Gastrocnemius medialis (tissue), 4 donors: ENCODE measurements at regions of chr7 and their contacts with region 1.

Region 1: GRCh38 chr7:106056513-106057203 is 55.5 kb downstream of the SYPL1 start:
- DNase-seq: peak; percentile 62 to 71
- ATAC-seq: peak; percentile 92 to 98
- H3K4me3 ChIP-seq: no peak overlapping the region
- H3K27ac ChIP-seq: no peak overlapping the region
- H3K4me1 ChIP-seq: peaks cover 0 to 4% of the 10 kb centered on the region in 2 donors
- H3K27me3 ChIP-seq: no peaks in the 10 kb centered on the region
- CTCF ChIP-seq: peak; percentile 88 to 92 (median 90)
- POLR2A ChIP-seq: no peak

Region 2: GRCh38 chr7:106031300-106032035 is 25.2 kb before region 1 on chr7:
- in situ Hi-C with region 1: no loop called
- intact Hi-C with region 1: no loop called
- DNase-seq: no peak
- ATAC-seq: no peak
- H3K4me3 ChIP-seq: no peak overlapping the region
- H3K27ac ChIP-seq: no peak overlapping the region
- H3K4me1 ChIP-seq: peaks cover 5 to 8% of the 10 kb centered on the region in 2 donors
- H3K27me3 ChIP-seq: no peaks in the 10 kb centered on the region
- CTCF ChIP-seq: no peak
- POLR2A ChIP-seq: no peak

Region 3: GRCh38 chr7:106153891-106154449 is 97.3 kb after region 1 on chr7:
- in situ Hi-C with region 1: loop called (anchors 5 kb)
- intact Hi-C with region 1: loop called (anchors 1 kb)
- DNase-seq: peak; percentile 66 to 79
- ATAC-seq: peak; percentile 89 to 98
- H3K4me3 ChIP-seq: peak overlapping the region in 2 of 4 donors; percentile 24 to 26
- H3K27ac ChIP-seq: no peak overlapping the region
- H3K4me1 ChIP-seq: peaks cover 13 to 19% of the 10 kb centered on the region in 2 donors
- H3K27me3 ChIP-seq: no peaks in the 10 kb centered on the region
- CTCF ChIP-seq: peak; percentile 95 to 98 (median 97)
- POLR2A ChIP-seq: no peak

Region 4: GRCh38 chr7:106450716-106451115 is 394.1 kb after region 1 on chr7:
- in situ Hi-C with region 1: loop called in 2 of 4 experiments (anchors 10 to 25 kb)
- intact Hi-C with region 1: no loop called
- DNase-seq: no peak
- ATAC-seq: no peak
- H3K4me3 ChIP-seq: no peak overlapping the region
- H3K27ac ChIP-seq: no peak overlapping the region
- H3K4me1 ChIP-seq: no peaks in the 10 kb centered on the region
- H3K27me3 ChIP-seq: no peaks in the 10 kb centered on the region
- CTCF ChIP-seq: no peak
- POLR2A ChIP-seq: no peak

Region 5: DNA sequence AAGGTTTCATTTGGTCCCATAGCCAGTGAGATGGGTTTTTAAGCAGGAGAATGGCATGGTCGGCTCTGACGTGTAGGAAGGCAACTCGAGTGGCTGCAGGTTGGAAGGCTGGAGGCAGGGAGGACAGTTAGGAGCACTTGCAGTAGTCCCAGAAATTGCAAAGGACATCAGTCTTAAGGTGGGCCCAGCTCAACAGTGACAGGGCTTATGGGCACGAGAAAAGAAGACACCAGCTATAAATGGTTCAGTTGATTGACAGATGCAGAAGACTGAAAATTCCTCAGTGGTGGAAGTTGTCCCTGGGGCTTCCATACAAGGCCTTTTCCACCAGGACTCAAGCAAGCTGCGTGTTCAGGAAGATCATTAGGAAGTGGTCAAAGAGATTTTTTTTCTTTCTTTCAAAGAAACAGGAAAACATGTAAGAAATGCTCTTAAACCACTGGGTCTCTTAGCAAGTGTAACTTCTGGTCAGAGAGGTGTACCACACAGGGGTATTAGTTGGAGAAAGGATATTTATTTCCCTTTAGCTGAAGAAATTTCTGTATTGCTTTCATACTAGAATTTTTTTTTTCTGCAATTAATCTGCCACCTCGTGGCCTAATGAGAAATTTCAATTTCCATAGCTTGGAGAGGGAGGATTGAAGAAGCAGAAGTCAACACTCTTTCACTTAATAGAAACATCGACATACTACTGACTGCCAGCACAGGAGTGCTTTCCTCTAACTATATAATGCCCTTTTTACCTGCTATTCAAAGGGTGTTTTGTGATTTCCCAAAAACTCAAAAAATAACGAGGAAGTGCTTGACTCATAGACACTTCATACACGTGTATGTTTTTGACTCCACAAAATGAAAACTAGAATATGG is 405.6 kb after region 1 on chr7:
- in situ Hi-C with region 1: loop called in 2 of 4 experiments (anchors 10 to 25 kb)
- intact Hi-C with region 1: no loop called
- DNase-seq: no peak
- ATAC-seq: peak; percentile 36 to 53
- H3K4me3 ChIP-seq: no peak overlapping the region
- H3K27ac ChIP-seq: no peak overlapping the region
- H3K4me1 ChIP-seq: peaks cover 0 to 6% of the 10 kb centered on the region in 2 donors
- H3K27me3 ChIP-seq: no peaks in the 10 kb centered on the region
- CTCF ChIP-seq: peak; percentile 40 to 73 (median 65)
- POLR2A ChIP-seq: no peak